GM12878 (cell line): ENCODE measurements at regions of chr7 and their contacts with region 1.

Region 1: GRCh38 chr7:23474094-23474828 is 4.0 kb upstream of the IGF2BP3 start:
- DNase-seq: peak; percentile 76
- ATAC-seq: peak; percentile 76
- H3K4me3 ChIP-seq: peak overlapping the region; percentile 89
- H3K27ac ChIP-seq: peak overlapping the region; percentile 94
- H3K4me1 ChIP-seq: no peaks in the 10 kb centered on the region
- H3K27me3 ChIP-seq: peaks cover 0 to 4% of the 10 kb centered on the region in 2 experiments; a peak in 1 of 4 replicates
- CTCF ChIP-seq: no peak
- EP300 ChIP-seq: no peak
- POLR2A ChIP-seq: peak; percentile 93
- RAD21 ChIP-seq: no peak

Region 2: GRCh38 chr7:23410446-23411183 is 63.6 kb before region 1 on chr7:
- CTCF ChIA-PET with region 1: no interaction called
- POLR2A ChIA-PET with region 1: no interaction called
- RAD21 ChIA-PET with region 1: interaction called, 3 read pairs
- SMC1A ChIA-PET with region 1: interaction called, 4 read pairs
- in situ Hi-C with region 1: no loop called
- intact Hi-C with region 1: loop called (anchors 2 kb)
- DNase-seq: peak; percentile 89
- ATAC-seq: peak; percentile 97
- H3K4me3 ChIP-seq: no peak overlapping the region; the same call in 1 of the 2 replicates
- H3K27ac ChIP-seq: peak overlapping the region; percentile 82
- H3K4me1 ChIP-seq: peaks cover 20% of the 10 kb centered on the region
- H3K27me3 ChIP-seq: no peaks in the 10 kb centered on the region
- CTCF ChIP-seq: no peak
- EP300 ChIP-seq: peak; percentile 65 to 69; a peak in 3 of 4 replicates
- POLR2A ChIP-seq: no peak
- RAD21 ChIP-seq: no peak

Region 3: DNA sequence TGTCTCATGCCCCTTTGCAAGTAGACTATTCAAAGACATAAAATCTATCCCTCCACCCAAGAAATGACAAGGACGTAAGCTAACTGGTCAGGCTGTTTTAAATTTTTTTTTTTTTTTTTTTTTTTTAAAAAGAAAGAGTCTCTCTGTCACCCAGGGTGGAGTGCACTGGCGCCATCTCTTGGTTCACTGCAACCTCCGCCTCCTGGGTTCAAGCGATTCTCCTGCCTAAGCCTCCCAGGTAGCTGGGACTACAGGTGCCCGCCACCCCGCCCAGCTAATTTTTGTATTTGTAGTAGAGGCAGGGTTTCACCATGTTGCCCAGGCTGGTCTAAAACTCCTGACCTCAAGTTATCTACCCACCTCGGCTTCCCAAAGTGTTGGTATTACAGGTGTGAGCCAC is 46.3 kb after region 1 on chr7:
- CTCF ChIA-PET with region 1: interaction called, 5 read pairs
- POLR2A ChIA-PET with region 1: interaction called, 9 read pairs
- RAD21 ChIA-PET with region 1: interaction called, 3 read pairs
- SMC1A ChIA-PET with region 1: interaction called, 10 read pairs
- in situ Hi-C with region 1: no loop called
- intact Hi-C with region 1: no loop called
- DNase-seq: no peak
- ATAC-seq: no peak
- H3K4me3 ChIP-seq: no peak overlapping the region
- H3K27ac ChIP-seq: no peak overlapping the region
- H3K4me1 ChIP-seq: peaks cover 5% of the 10 kb centered on the region
- H3K27me3 ChIP-seq: no peaks in the 10 kb centered on the region
- CTCF ChIP-seq: no peak
- EP300 ChIP-seq: no peak
- POLR2A ChIP-seq: no peak
- RAD21 ChIP-seq: 0 out of 2 replicates have a peak, but pooled peaks have one; percentile 12

Region 4: GRCh38 chr7:23539494-23539907 is 65.2 kb after region 1 on chr7:
- CTCF ChIA-PET with region 1: interaction called, 6 read pairs
- POLR2A ChIA-PET with region 1: interaction called, 6 read pairs
- RAD21 ChIA-PET with region 1: interaction called, 11 read pairs
- SMC1A ChIA-PET with region 1: interaction called, 9 read pairs
- in situ Hi-C with region 1: no loop called
- intact Hi-C with region 1: no loop called
- DNase-seq: peak; percentile 62
- ATAC-seq: peak; percentile 80
- H3K4me3 ChIP-seq: no peak overlapping the region
- H3K27ac ChIP-seq: peak overlapping the region; percentile 79
- H3K4me1 ChIP-seq: peaks cover 15% of the 10 kb centered on the region
- H3K27me3 ChIP-seq: no peaks in the 10 kb centered on the region
- CTCF ChIP-seq: no peak
- EP300 ChIP-seq: no peak
- POLR2A ChIP-seq: no peak
- RAD21 ChIP-seq: no peak